A549 (cell line): ENCODE measurements at regions of chr6 and their contacts with region 1.

Region 1: DNA sequence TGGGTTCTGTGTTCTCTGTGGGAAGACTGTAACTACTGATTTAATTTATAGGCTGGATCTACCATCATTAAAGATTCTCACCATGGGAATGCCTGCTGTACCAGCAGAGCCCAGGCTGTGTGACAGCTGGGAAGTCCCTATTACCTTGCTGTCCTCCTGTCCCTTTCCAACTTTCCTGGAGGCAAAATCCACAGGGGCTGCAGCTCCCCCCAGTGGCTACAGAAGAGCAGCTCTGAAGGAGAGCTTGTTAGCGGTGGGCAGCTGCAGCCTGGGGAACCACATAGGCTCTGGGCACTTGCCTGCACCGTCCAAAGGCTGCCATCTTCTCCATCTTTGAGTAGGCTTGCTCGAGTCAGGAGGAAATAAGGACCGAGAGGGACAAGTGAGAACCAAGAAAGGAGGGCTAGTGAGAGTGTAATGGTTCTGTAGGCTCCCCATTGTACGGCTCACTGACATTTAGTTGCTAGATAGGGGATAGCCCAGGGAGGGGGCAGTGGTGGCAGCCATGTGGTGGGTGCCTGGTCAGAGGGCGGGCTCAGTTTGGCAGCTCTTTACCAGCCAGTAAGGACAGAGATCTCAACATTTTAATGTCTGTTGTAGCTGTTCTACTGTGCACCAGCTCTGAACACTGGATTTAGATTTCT is 155.1 kb upstream of the MLIP start:
- DNase-seq: peak; percentile 56 to 74
- ATAC-seq: peak; percentile 99 to 100
- H3K4me3 ChIP-seq: no peak overlapping the region
- H3K27ac ChIP-seq: no peak overlapping the region
- H3K4me1 ChIP-seq: no peaks in the 10 kb centered on the region
- CTCF ChIP-seq: peak; percentile 61
- EP300 ChIP-seq: no peak
- POLR2A ChIP-seq: no peak
- RAD21 ChIP-seq: peak; percentile 80 to 84

Region 2: GRCh38 chr6:53718597-53719460 is 237.4 kb before region 1 on chr6:
- CTCF ChIA-PET with region 1: interaction called, 55 read pairs
- POLR2A ChIA-PET with region 1: no interaction called
- DNase-seq: peak; percentile 46 to 64
- ATAC-seq: peak; percentile 86 to 88
- H3K4me3 ChIP-seq: no peak overlapping the region
- H3K27ac ChIP-seq: no peak overlapping the region
- H3K4me1 ChIP-seq: peaks cover 7% of the 10 kb centered on the region; the same call in 1 of the 3 replicates
- CTCF ChIP-seq: peak; percentile 71
- EP300 ChIP-seq: no peak
- POLR2A ChIP-seq: no peak
- RAD21 ChIP-seq: peak; percentile 32 to 51; a peak in 4 of 5 replicates

Region 3: GRCh38 chr6:53794720-53795253 is 161.4 kb before region 1 on chr6 and contains the start of gene LRRC1:
- CTCF ChIA-PET with region 1: interaction called, 50 read pairs
- POLR2A ChIA-PET with region 1: interaction called, 33 read pairs
- DNase-seq: peak; percentile 74 to 87
- ATAC-seq: peak; percentile 78 to 84
- H3K4me3 ChIP-seq: peak within 1 kb of the TSS; percentile 88
- H3K27ac ChIP-seq: peak within 1 kb of the TSS; percentile 95 to 97
- H3K4me1 ChIP-seq: peaks cover 18% of the 10 kb centered on the region; the same call in 2 of the 3 replicates
- CTCF ChIP-seq: no peak
- EP300 ChIP-seq: no peak
- POLR2A ChIP-seq: peak; percentile 63
- RAD21 ChIP-seq: no peak
- polyA plus RNA-seq, gene LRRC1: 7.3 and 8.0 TPM in 2 replicates

Region 4: DNA sequence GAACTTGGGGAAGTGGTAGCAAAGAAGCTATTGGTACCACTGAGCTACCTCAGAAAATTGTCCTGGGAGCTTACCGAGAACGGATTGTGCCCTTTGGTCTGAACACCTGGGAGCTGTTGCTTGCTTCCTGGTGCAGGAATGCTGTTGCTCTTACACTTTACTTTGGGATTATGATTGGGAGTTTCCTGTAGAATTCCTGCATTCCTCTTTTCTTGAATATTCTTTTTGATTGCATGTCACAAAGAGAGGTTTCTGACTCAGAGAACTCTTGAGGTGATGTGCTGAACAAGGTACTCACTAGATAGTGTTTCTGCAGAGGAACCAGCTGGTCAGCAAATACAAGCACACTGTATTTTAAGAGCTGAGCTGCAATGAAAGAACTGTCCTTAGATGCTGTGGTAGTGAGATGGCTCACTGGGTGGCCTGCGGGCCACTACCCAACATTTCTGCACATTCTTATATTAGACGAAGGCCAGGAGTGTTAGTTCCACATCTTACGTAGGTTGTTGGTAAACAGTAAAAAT is 126.4 kb before region 1 on chr6:
- CTCF ChIA-PET with region 1: no interaction called
- POLR2A ChIA-PET with region 1: no interaction called
- DNase-seq: no peak
- ATAC-seq: no peak
- H3K4me3 ChIP-seq: no peak overlapping the region
- H3K27ac ChIP-seq: no peak overlapping the region
- H3K4me1 ChIP-seq: peaks cover 5% of the 10 kb centered on the region; the same call in 1 of the 3 replicates
- CTCF ChIP-seq: no peak
- EP300 ChIP-seq: no peak
- POLR2A ChIP-seq: no peak
- RAD21 ChIP-seq: no peak

Region 5: GRCh38 chr6:53906842-53907241 is 49.3 kb before region 1 on chr6:
- CTCF ChIA-PET with region 1: no interaction called
- POLR2A ChIA-PET with region 1: no interaction called
- DNase-seq: no peak
- ATAC-seq: no peak
- H3K4me3 ChIP-seq: no peak overlapping the region
- H3K27ac ChIP-seq: no peak overlapping the region
- H3K4me1 ChIP-seq: no peaks in the 10 kb centered on the region
- CTCF ChIP-seq: no peak
- EP300 ChIP-seq: no peak
- POLR2A ChIP-seq: no peak
- RAD21 ChIP-seq: no peak

Region 6: GRCh38 chr6:53943395-53943794 is 12.8 kb before region 1 on chr6:
- CTCF ChIA-PET with region 1: interaction called, 29 read pairs
- POLR2A ChIA-PET with region 1: no interaction called
- DNase-seq: no peak
- ATAC-seq: no peak
- H3K4me3 ChIP-seq: no peak overlapping the region
- H3K27ac ChIP-seq: no peak overlapping the region
- H3K4me1 ChIP-seq: no peaks in the 10 kb centered on the region
- CTCF ChIP-seq: no peak
- EP300 ChIP-seq: no peak
- POLR2A ChIP-seq: no peak
- RAD21 ChIP-seq: no peak